IMR-90 (cell line): ENCODE measurements at regions of chr18 and their contacts with region 1.

Region 1: DNA sequence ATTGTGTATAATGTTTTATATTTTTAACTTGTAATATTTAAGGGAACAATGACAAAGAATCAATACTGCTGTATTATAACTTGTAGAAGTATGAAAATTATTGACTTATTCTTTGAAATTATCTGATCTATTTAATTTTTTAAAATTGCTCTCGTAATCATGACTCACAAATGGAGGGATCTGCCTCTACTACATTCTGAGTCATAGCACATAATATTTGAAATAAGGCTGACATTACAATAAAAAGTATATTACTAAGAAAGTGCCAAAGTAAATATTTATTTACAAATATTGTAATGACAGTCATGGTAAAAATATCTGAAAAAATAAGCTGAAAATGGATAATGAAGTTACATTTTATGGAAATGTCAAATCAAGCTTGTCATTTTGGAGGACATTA is 1144.6 kb upstream of the CDH2 start:
- DNase-seq: peak; percentile 2
- ATAC-seq: no peak
- H3K4me3 ChIP-seq: no peak overlapping the region
- H3K27ac ChIP-seq: no peak overlapping the region
- H3K4me1 ChIP-seq: no peaks in the 10 kb centered on the region
- H3K27me3 ChIP-seq: no peaks in the 10 kb centered on the region
- CTCF ChIP-seq: no peak
- POLR2A ChIP-seq: no peak
- RAD21 ChIP-seq: no peak

Region 2: DNA sequence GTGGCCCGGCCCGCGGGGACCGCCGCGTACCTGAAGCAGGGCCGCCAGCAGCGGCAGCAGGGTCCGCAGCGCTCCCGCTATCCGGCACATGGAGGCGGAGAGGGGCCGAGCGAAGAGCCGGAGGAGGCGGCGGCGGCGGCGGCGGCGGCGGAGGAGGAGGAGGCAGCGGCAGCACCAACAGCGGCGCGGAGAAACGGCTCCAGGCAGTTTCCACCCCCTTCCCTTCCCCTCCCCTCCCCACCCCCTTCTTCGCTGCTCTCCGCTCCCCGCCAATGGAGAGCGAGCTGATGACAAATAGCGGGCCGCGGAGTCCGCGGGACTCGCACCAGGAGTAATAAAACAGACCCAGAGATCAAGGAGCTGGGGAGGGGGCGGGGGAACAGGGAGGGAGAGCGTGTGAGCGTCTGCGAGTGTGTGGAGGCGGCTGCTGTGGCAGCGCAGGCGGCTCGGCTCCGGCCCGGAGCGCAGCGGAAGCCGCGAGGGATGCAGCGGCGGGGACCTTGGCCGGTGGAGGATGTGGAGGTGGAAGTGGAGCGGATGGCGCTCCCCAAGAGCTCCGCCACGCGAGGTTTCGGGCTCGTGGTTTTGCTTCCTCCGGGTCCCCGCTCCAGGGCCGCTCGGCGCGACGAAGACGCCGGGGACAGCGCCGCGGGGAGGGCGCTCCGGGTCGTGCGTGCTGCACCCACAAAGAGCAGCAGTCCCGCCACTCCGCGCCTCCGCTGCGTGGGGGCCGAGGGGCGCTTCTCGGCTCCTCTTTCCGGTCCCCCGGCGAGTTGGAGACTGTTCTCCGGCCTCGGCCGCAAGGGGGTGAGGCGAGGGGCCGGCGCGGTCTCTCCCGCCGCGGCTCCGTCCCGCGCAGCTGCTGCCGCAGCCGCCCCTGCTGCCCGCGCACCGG is 1144.4 kb before region 1 on chr18 and contains the start of gene CDH2:
- CTCF ChIA-PET with region 1: no interaction called
- POLR2A ChIA-PET with region 1: no interaction called
- dilution Hi-C with region 1: no loop called
- in situ Hi-C with region 1: no loop called
- intact Hi-C with region 1: no loop called
- DNase-seq: peak; percentile 85
- ATAC-seq: peak; percentile 73
- H3K4me3 ChIP-seq: peak within 1 kb of the TSS; percentile 99
- H3K27ac ChIP-seq: peak within 1 kb of the TSS; percentile 18; the same call in 1 of the 2 replicates
- H3K4me1 ChIP-seq: peaks cover 3% of the 10 kb centered on the region; the same call in 1 of the 2 replicates
- H3K27me3 ChIP-seq: no peaks in the 10 kb centered on the region
- CTCF ChIP-seq: peak; percentile 17; the same call in 1 of the 2 replicates
- POLR2A ChIP-seq: peak; percentile 53; the same call in 1 of the 2 replicates
- RAD21 ChIP-seq: no peak
- total RNA-seq, gene CDH2: 105 and 111 TPM in 2 replicates

Region 3: GRCh38 chr18:29361853-29362252 is 40.3 kb after region 1 on chr18:
- CTCF ChIA-PET with region 1: no interaction called
- POLR2A ChIA-PET with region 1: no interaction called
- dilution Hi-C with region 1: no loop called
- in situ Hi-C with region 1: no loop called
- intact Hi-C with region 1: loop called (anchors 1 kb)
- DNase-seq: no peak
- ATAC-seq: no peak
- H3K4me3 ChIP-seq: no peak overlapping the region
- H3K27ac ChIP-seq: no peak overlapping the region
- H3K4me1 ChIP-seq: no peaks in the 10 kb centered on the region
- H3K27me3 ChIP-seq: no peaks in the 10 kb centered on the region
- CTCF ChIP-seq: no peak
- POLR2A ChIP-seq: no peak
- RAD21 ChIP-seq: no peak